ENCODE measurements at regions of chr5 and their contacts with region 1.

Region 1: DNA sequence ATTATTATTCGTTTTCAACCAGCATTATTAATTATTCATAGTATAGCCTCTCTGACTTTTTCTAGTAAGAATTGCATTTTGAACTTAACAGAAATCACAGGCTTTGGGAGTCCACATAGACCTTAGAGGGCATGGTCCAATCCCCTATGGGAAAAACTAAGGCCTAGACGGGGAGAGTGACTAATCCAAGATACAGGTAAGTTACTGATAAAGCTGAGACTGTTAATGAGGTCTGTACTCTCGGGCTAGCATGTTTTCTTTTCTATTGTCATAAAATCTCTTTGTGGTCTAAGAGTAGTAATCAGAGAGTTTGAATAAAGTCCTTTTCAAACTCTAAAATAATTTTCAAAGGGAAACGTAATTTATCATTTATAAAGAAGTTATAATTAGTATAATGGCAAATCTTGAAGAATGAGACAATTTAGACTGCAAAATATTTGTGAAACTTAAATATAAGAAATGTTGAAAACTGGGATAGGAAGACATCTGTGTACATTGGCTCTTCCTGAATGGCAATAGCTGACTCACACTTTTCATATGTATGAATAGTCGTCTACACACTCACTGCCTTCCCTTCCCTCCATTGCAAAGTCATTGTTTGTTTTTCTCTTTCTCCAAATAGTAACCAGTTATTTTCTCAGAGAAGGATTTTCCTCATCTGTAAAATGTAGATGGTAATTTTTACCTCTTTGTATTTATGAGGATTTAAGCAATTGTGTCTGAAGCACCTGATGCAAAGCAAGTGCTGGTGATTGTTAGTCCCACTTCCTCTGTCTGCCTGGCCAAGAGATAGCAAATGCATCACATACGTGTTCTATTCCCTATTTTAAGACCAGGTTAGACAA is 207.9 kb upstream of the CD180 start:
- DNase-seq: peak; percentile 8
- ATAC-seq: no peak; the same call in 2 of the 3 replicates
- H3K4me3 ChIP-seq: no peak overlapping the region
- H3K27ac ChIP-seq: no peak overlapping the region
- H3K4me1 ChIP-seq: no peaks in the 10 kb centered on the region
- H3K27me3 ChIP-seq: no peaks in the 10 kb centered on the region
- CTCF ChIP-seq: no peak
- EP300 ChIP-seq: no peak
- POLR2A ChIP-seq: no peak
- RAD21 ChIP-seq: no peak

Region 2: GRCh38 chr5:67416133-67416937 is 11.9 kb after region 1 on chr5:
- CTCF ChIA-PET with region 1: no interaction called
- POLR2A ChIA-PET with region 1: no interaction called
- in situ Hi-C with region 1: no loop called
- intact Hi-C with region 1: loop called (anchors 1 kb)
- DNase-seq: no peak
- ATAC-seq: no peak
- H3K4me3 ChIP-seq: no peak overlapping the region
- H3K27ac ChIP-seq: no peak overlapping the region
- H3K4me1 ChIP-seq: no peaks in the 10 kb centered on the region
- H3K27me3 ChIP-seq: no peaks in the 10 kb centered on the region
- CTCF ChIP-seq: no peak
- EP300 ChIP-seq: no peak
- POLR2A ChIP-seq: no peak
- RAD21 ChIP-seq: no peak